ENCODE measurements at regions of chr19 and their contacts with region 1.

Region 1: GRCh38 chr19:49676690-49677231 is 310 bp upstream of the PRMT1 start:
- DNase-seq: peak; percentile 100
- H3K4me3 ChIP-seq: peak overlapping the region in 3 of 4 donors; percentile 92 to 98 (median 95)
- H3K27ac ChIP-seq: peak overlapping the region; percentile 74 to 97 (median 94)
- H3K4me1 ChIP-seq: peaks cover 27 to 43% of the 10 kb centered on the region in 2 donors
- H3K27me3 ChIP-seq: no peaks in the 10 kb centered on the region
- CTCF ChIP-seq: no peak
- POLR2A ChIP-seq: no peak

Region 2: GRCh38 chr19:49580264-49581006 is 96.3 kb before region 1 on chr19 and contains the start of gene NOSIP:
- intact Hi-C with region 1: loop called in 1 of 2 experiments (anchors 10 kb)
- DNase-seq: peak; percentile 94 to 98 (median 96)
- H3K4me3 ChIP-seq: peak within 1 kb of the TSS; percentile 26 to 76 (median 50)
- H3K27ac ChIP-seq: peak within 1 kb of the TSS; percentile 11 to 80 (median 28)
- H3K4me1 ChIP-seq: peaks cover 10 to 18% of the 10 kb centered on the region in 2 donors
- H3K27me3 ChIP-seq: no peaks in the 10 kb centered on the region
- CTCF ChIP-seq: peak in 1 of 6 experiments; percentile 13
- POLR2A ChIP-seq: peak; percentile 72 to 95
- total RNA-seq, gene NOSIP: 53.3 to 98.2 (median 63.8) TPM